A673 (cell line): ENCODE measurements at regions of chr10 and their contacts with region 1.

Region 1: GRCh38 chr10:122703439-122704118 is 3.9 kb upstream of the C10orf120 start:
- DNase-seq: peak; percentile 70
- H3K4me3 ChIP-seq: no peak overlapping the region
- H3K27ac ChIP-seq: no peak overlapping the region
- H3K4me1 ChIP-seq: no peaks in the 10 kb centered on the region
- H3K27me3 ChIP-seq: peaks cover 12% of the 10 kb centered on the region
- CTCF ChIP-seq: peak; percentile 82

Region 2: GRCh38 chr10:122279725-122280141 is 423.8 kb before region 1 on chr10:
- CTCF ChIA-PET with region 1: interaction called, 3 read pairs
- POLR2A ChIA-PET with region 1: no interaction called
- intact Hi-C with region 1: loop called (anchors 5 kb)
- DNase-seq: peak; percentile 60
- H3K4me3 ChIP-seq: no peak overlapping the region
- H3K27ac ChIP-seq: no peak overlapping the region
- H3K4me1 ChIP-seq: no peaks in the 10 kb centered on the region
- H3K27me3 ChIP-seq: peaks cover 13% of the 10 kb centered on the region
- CTCF ChIP-seq: peak; percentile 68

Region 3: GRCh38 chr10:122298598-122299301 is 404.8 kb before region 1 on chr10:
- CTCF ChIA-PET with region 1: no interaction called
- POLR2A ChIA-PET with region 1: no interaction called
- intact Hi-C with region 1: loop called (anchors 2 kb)
- DNase-seq: peak; percentile 79
- H3K4me3 ChIP-seq: no peak overlapping the region
- H3K27ac ChIP-seq: no peak overlapping the region
- H3K4me1 ChIP-seq: no peaks in the 10 kb centered on the region
- H3K27me3 ChIP-seq: no peaks in the 10 kb centered on the region
- CTCF ChIP-seq: peak; percentile 86

Region 4: DNA sequence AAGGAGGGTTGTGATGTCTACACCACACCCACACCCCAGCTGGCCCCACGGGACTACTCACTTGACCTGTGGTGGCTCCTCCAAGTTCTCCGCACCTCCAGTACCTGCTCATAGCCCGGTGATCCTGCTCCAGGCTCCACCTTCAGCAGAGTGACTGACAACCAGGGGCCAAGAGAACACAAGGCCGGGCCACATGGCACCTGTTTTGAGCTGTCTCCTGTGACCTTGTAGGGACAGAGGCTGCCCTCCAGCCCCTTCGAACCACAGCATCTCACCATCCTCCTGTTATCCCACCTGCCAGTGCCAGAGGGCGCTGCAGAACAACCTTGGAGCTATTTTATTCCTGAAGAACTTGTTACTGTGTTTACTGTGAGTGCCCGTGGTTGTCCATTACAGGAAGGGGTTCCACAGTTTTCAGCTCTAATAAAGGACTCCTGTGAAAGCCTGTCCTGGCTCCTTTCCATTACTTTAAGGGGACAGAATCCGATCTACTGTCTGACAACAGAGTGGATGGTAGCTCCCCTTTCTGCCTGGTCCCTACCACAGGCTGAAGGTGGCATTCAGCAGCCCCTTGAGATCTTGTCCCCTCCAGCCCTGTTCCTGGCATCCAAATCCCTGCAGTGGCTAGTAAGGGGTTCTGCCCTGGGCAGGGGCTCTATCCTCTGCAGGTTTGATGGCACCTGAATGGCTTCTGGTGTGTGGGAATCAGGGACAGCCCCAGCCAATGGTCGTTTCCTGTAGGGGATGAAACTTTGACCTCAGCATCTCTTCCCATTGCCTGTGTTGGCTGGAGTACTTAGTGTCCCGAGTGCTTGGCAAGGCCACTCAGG is 54.8 kb before region 1 on chr10:
- CTCF ChIA-PET with region 1: interaction called, 6 read pairs
- POLR2A ChIA-PET with region 1: no interaction called
- intact Hi-C with region 1: loop called (anchors 1 kb)
- DNase-seq: peak; percentile 54
- H3K4me3 ChIP-seq: no peak overlapping the region
- H3K27ac ChIP-seq: no peak overlapping the region
- H3K4me1 ChIP-seq: no peaks in the 10 kb centered on the region
- H3K27me3 ChIP-seq: peaks cover 43% of the 10 kb centered on the region
- CTCF ChIP-seq: peak; percentile 84

Region 5: DNA sequence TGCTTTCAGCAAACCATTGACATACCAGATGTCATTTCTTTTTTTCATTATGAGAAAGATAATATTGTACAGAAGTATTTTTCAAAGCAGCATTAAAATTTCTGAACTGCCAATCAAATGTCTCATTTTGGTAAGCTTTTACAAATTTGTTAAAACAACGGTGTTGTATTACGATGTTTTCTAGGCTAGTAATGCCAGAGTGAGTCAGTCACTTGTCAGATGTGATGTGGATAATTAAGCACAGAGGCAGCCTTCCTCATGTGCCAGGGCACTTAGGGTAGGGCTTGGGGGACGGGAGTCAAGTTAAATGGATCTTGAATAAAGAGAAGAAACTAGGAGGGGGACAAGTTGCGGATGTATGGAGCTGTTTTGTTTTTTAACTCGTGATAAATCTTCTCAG is 286.7 kb after region 1 on chr10:
- CTCF ChIA-PET with region 1: no interaction called
- POLR2A ChIA-PET with region 1: no interaction called
- intact Hi-C with region 1: no loop called
- DNase-seq: peak; percentile 6
- H3K4me3 ChIP-seq: no peak overlapping the region
- H3K27ac ChIP-seq: no peak overlapping the region
- H3K4me1 ChIP-seq: no peaks in the 10 kb centered on the region
- H3K27me3 ChIP-seq: no peaks in the 10 kb centered on the region
- CTCF ChIP-seq: no peak

Region 6: DNA sequence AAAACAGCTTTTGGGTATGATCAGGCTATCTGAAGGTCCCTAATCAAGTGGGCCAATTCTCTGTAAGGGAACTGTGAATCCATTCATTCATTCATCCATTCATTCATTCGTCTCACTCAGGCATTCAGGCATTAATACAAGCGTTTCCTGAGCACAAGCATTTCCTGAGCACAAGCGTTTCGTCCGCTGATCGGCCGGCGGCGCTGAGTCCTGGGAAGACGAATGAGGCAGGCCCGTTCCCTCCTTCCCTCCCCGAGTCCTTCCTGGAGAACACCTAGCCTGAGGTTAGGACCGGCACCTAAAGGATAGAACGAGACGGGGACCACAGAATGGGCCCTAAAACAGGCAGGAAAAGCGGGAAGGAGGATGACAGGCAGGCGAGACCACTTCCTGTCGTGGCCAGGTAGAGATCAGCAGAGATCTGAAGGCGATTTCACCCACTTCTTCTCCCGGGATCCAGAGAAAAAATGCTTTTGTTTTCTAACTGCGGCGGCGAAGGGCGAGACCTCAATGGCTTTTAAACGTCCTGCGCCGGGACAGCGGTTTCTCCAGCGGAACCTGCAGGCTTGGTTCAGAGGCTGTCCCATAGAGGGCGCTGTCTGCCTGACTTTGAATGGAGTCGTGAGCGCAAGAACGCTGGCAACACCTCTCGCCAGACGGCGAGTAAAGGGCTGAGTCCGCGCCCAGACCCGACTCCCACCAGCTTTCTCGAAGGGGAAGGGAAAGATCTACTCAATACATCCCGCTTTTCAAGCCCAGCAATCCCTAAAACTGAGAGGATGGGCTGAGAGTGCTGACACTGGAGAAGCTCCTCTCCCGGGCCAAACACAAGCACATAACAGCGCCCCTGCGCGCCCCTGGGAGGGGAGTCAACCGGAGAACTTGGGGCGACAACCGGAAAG is 429.2 kb after region 1 on chr10:
- CTCF ChIA-PET with region 1: no interaction called
- POLR2A ChIA-PET with region 1: no interaction called
- intact Hi-C with region 1: no loop called
- DNase-seq: peak; percentile 89
- H3K4me3 ChIP-seq: no peak overlapping the region
- H3K27ac ChIP-seq: no peak overlapping the region
- H3K4me1 ChIP-seq: peaks cover 29% of the 10 kb centered on the region
- H3K27me3 ChIP-seq: peaks cover 99% of the 10 kb centered on the region
- CTCF ChIP-seq: peak; percentile 95